ENCODE measurements at regions of chr3 and their contacts with region 1.

Region 1: DNA sequence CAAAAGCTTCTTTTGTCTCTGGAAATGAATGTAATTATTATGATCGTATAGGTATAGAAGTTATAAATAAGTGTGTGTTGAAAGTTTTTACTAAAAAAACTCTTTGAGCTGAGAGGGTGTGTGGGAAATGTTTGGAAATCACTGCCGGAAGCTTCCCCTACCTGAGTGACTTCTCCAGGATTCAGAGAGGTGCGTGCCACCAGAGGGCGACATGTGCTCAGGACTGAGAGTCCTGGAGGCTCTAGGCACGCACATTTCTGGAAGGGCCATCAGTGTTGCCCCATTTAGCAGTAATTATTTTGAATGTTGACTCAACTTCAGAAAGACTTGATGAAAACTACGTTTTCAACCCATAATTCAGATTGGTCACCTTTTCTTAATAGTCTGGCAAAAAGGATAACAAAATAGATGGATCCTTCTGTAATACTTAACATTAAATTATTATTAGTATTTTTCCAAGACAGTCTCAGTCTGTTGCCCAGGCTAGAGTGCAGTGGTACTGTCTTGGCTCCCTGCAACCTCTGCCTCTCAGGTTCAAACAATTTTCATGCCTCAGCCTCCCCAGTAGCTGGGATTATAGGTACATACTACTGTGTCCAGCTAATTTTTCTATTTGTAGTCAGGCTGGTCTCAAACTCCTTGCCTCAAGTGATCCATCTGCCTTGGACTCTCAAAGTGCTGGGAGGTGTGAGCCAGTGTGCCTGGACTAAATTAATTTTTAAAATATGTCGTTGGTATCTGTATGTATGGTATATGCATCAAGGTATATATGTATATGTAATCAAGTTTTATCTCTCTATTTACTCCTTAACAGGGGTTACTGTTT is 34.5 kb downstream of the GPR171 start:
- DNase-seq: peak; percentile 90
- ATAC-seq: peak; percentile 68
- H3K4me3 Mint-ChIP-seq: no peak overlapping the region
- H3K27ac Mint-ChIP-seq: peak overlapping the region; percentile 49
- H3K4me1 Mint-ChIP-seq: peaks cover 44% of the 10 kb centered on the region
- H3K27me3 Mint-ChIP-seq: no peaks in the 10 kb centered on the region

Region 2: DNA sequence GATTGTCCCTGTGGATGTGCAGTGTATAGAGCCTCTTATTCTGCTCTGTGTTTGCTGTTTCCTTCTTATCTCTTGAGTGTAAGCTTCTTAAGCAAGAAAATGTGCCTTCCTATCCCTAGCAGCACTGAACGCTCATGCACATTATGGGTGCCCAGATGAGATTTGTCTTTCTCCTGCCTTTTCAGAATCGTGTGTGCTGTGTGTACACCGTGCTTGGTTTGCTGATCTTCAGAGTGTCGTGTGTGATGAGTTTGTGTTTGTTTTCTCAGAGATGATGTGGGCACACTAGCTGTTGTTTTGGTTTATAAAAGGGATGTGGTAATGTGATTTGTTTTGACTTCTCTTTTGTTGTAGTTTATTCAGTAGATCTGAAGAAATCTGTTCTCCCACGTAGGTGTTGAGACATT is 14.8 kb after region 1 on chr3:
- CTCF ChIA-PET with region 1: interaction called, 22 read pairs
- DNase-seq: peak; percentile 55
- ATAC-seq: peak; percentile 85
- H3K4me3 Mint-ChIP-seq: peak overlapping the region; percentile 64
- H3K27ac Mint-ChIP-seq: peak overlapping the region; percentile 83
- H3K4me1 Mint-ChIP-seq: peaks cover 50% of the 10 kb centered on the region
- H3K27me3 Mint-ChIP-seq: no peaks in the 10 kb centered on the region

Region 3: DNA sequence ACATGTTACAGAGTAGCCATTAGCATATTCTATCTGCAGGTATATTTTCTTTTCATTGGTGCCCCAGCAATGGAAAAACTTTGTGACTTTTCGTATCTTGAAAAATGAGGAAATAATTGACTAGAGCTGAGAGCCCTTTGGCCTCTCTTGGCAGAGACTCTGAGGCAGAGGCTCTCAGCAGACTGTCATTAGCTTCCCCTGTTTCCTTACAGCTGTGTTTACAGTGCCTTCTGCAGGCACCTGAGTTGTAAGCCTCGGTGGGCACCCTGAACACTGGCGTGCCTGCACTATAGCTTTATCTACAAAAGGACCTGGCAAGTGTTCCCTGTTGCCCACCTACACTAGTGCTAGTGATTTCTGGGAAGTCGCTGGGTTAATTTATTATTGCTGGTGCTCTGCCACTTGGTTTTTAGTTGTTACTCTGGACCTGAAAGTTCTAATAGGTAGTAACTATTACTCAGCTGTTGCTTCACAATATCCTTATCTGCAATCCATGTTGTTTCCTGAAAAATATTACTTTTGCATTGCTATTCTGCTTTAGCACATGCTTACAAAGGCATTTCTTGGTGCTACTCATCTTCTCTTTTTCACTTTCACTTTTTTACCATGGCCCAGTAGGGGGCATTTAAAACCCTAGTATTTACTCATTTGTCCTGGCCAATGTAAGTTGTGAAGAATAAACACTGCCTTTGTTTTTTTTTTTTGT is 42.3 kb after region 1 on chr3:
- CTCF ChIA-PET with region 1: interaction called, 63 read pairs
- DNase-seq: peak; percentile 57
- ATAC-seq: peak; percentile 46
- H3K4me3 Mint-ChIP-seq: peak overlapping the region; percentile 52
- H3K27ac Mint-ChIP-seq: peak overlapping the region; percentile 90
- H3K4me1 Mint-ChIP-seq: peaks cover 61% of the 10 kb centered on the region
- H3K27me3 Mint-ChIP-seq: no peaks in the 10 kb centered on the region

Region 4: GRCh38 chr3:151265866-151266265 is 97.4 kb after region 1 on chr3:
- CTCF ChIA-PET with region 1: interaction called, 20 read pairs
- DNase-seq: no peak
- ATAC-seq: no peak
- H3K4me3 Mint-ChIP-seq: no peak overlapping the region
- H3K27ac Mint-ChIP-seq: no peak overlapping the region
- H3K4me1 Mint-ChIP-seq: peaks cover 33% of the 10 kb centered on the region
- H3K27me3 Mint-ChIP-seq: no peaks in the 10 kb centered on the region

Region 5: GRCh38 chr3:151327571-151328198 is 159.2 kb after region 1 on chr3:
- CTCF ChIA-PET with region 1: interaction called, 15 read pairs
- DNase-seq: no peak
- ATAC-seq: no peak
- H3K4me3 Mint-ChIP-seq: no peak overlapping the region
- H3K27ac Mint-ChIP-seq: no peak overlapping the region
- H3K4me1 Mint-ChIP-seq: peaks cover 12% of the 10 kb centered on the region
- H3K27me3 Mint-ChIP-seq: peaks cover 2% of the 10 kb centered on the region